ENCODE measurements at regions of chr5 and their contacts with region 1.

Region 1: DNA sequence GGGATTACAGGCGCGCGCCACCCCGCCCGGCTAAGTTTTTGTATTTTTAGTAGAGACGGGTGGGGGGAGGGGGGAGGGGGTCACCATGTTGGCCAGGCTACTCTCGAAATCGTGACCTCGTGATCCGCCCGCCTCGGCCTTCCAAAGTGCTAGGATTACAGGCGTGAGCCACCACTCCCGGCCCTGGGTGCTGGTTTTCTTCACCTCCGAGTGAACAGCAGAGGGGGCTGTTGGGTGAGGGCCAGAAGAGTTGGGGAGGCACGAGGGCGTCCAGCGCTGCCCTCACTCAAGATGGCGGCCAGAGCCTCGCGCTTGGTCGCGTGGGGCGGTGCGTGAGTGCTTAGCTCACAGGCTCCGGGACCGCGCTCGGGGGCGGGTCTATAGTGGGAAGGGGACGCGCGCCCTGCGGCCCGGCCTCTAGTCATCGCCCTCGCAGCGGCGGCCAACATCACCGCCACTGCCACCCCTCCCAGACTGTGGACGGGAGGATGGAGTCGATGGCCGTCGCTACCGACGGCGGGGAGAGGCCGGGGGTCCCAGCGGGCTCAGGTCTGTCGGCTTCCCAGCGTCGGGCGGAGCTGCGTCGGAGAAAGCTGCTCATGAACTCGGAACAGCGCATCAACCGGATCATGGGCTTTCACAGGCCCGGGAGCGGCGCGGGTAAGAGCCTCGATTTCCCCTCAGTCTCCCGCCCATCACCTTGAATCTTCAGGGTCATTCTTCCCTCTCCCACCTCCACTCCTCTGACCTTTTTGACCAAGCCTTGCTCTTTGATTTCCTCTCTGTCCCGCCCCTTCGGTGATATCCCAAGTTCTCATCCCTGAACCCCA is at the start of gene CAMLG:
- DNase-seq: peak; percentile 96
- ATAC-seq: peak; percentile 91
- H3K4me3 ChIP-seq: peak within 1 kb of the TSS; percentile 66 to 77
- H3K27ac ChIP-seq: peak within 1 kb of the TSS; percentile 70
- H3K4me1 ChIP-seq: peaks cover 9 to 24% of the 10 kb centered on the region in 2 experiments
- H3K27me3 ChIP-seq: no peaks in the 10 kb centered on the region
- CTCF ChIP-seq: peak; percentile 49 to 79 (median 66)
- POLR2A ChIP-seq: peak; percentile 65
- RAD21 ChIP-seq: peak; percentile 65
- total RNA-seq, gene CAMLG: 29.3 TPM

Region 2: GRCh38 chr5:134304311-134304710 is 434.0 kb before region 1 on chr5:
- CTCF ChIA-PET with region 1: no interaction called
- POLR2A ChIA-PET with region 1: no interaction called
- RAD21 ChIA-PET with region 1: no interaction called
- intact Hi-C with region 1: loop called (anchors 10 kb)
- DNase-seq: no peak
- ATAC-seq: no peak
- H3K4me3 ChIP-seq: no peak overlapping the region
- H3K27ac ChIP-seq: no peak overlapping the region
- H3K4me1 ChIP-seq: no peaks in the 10 kb centered on the region
- H3K27me3 ChIP-seq: no peaks in the 10 kb centered on the region
- CTCF ChIP-seq: no peak
- POLR2A ChIP-seq: no peak
- RAD21 ChIP-seq: no peak

Region 3: DNA sequence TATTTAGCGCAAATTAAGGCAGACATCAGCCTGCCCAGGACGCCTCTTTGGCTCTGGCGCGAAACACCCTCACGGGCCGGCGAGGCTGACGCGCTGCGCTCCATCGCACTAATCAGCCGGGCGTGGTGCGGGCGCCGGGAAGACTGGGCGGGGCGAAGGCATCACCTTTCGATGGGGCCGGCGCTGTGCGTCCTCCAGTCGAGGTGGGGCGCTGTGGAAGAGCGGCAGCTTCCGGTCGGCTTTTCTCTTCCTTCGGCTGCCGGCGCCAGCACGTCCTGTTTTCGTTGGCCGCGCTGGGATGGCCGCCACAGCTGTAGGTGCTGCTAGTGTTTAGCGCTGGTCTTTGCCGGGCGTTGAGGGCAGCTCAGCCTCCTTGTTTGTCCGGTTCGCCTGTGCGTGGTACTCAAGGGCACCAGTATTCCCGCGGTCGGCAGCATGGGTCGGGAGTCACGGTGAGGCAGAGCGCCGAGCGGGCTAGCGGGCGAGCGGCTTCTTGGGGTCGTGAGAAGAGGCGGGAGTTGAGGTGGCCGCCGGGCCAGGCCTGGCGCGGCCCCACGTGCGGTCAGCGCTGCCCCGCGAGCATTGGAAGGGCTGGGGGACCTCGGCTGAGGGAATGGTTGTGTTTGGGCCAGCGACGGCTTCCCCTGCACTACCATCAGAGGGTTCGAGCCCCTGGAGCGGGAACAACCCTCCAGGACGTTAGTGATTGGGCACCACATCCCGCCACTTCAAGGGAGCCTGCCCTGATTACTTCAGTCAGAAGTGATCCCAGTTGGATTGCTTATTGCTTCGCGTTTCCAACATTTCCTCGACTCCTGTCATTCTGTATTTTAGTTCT is 20.4 kb after region 1 on chr5 and contains the start of gene DDX46:
- CTCF ChIA-PET with region 1: interaction called, 3 read pairs
- POLR2A ChIA-PET with region 1: interaction called, 16 read pairs
- RAD21 ChIA-PET with region 1: no interaction called
- intact Hi-C with region 1: no loop called
- DNase-seq: peak; percentile 84
- ATAC-seq: peak; percentile 97
- H3K4me3 ChIP-seq: peak within 1 kb of the TSS; percentile 68 to 79
- H3K27ac ChIP-seq: peak within 1 kb of the TSS; percentile 67
- H3K4me1 ChIP-seq: peaks cover 10 to 19% of the 10 kb centered on the region in 2 experiments
- H3K27me3 ChIP-seq: no peaks in the 10 kb centered on the region
- CTCF ChIP-seq: peak; percentile 66 to 72 (median 71); a peak in 5 of 6 replicates
- POLR2A ChIP-seq: peak; percentile 48
- RAD21 ChIP-seq: 0 out of 2 replicates have a peak, but pooled peaks have one; percentile 10
- total RNA-seq, gene DDX46: 99.3 TPM

Region 4: DNA sequence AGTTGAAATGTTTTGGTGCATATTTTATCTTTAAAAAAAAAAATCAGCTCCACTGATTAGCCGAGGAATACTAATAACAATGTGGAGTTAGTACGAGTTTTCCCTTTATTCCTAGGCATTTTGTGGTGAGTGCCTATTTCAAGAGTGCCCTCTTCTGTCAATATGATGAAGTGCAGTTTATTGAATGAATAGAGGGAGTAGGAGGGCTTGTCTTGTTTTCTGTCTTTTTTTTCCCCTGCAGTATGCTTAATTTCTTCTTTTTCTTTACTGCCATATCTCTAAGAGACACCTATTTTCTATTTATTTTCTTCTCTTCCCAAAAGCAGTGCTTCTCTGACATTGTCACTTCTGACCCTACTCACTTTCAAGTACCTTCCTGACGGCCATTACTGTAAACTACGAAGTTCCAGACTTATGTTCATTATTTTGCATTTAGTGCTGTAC is 465.3 kb after region 1 on chr5:
- CTCF ChIA-PET with region 1: no interaction called
- POLR2A ChIA-PET with region 1: no interaction called
- RAD21 ChIA-PET with region 1: no interaction called
- intact Hi-C with region 1: loop called (anchors 5 kb)
- DNase-seq: no peak
- ATAC-seq: peak; percentile 76
- H3K4me3 ChIP-seq: 0 out of 4 replicates have a peak overlapping the region, but pooled peaks of 1 of the 2 experiments have one; percentile 11
- H3K27ac ChIP-seq: no peak overlapping the region
- H3K4me1 ChIP-seq: peaks cover 6 to 17% of the 10 kb centered on the region in 2 experiments
- H3K27me3 ChIP-seq: no peaks in the 10 kb centered on the region
- CTCF ChIP-seq: peak; percentile 54 to 67 (median 58); a peak in 5 of 6 replicates
- POLR2A ChIP-seq: no peak
- RAD21 ChIP-seq: peak; percentile 73